ENCODE measurements at regions of chr2 and their contacts with region 1.

Region 1: DNA sequence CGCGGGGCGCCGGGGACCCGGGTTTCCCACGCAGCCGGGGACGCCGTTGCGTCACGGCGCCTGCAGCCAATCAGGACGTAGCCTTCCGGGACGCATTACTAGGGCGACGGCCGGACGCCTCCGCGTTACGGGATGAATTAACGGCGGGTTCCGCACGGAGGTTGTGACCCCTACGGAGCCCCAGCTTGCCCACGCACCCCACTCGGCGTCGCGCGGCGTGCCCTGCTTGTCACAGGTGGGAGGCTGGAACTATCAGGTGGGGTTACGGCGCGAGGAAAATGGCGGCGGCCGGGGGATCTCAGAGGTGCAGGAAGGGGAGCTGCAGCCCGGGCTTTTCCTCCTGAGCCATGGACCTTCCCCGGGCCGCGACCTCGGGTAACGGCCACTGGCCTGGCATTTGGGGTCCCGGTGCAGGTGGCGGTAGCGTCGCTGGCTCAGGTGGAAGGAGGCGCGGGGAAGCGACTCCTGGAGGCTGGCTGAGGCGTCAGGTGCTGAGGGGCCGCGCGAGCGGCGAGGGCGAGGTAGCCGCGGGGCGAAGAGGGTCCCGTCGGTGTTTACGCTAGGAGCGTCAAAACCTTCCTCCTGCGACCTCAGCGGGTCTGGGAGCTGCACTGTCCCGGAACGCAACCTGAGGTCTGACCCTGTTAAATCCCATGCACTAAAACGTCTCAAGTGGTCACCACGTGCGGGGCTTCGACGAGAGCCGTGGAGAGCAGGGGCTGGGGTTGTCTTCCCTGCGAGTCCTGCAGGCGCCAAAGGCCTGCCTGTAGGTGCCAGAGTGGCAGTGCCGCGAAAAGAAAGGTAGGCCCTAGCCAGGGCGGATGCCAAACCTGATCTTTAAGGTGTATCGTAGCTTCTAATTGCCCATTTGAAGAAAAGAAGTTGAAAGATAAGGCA is at the start of gene LCLAT1:
- DNase-seq: peak; percentile 90
- H3K4me3 Mint-ChIP-seq: peak within 1 kb of the TSS; percentile 88
- H3K27ac Mint-ChIP-seq: peak within 1 kb of the TSS; percentile 95
- H3K4me1 Mint-ChIP-seq: peaks cover 24% of the 10 kb centered on the region
- H3K27me3 Mint-ChIP-seq: no peaks in the 10 kb centered on the region
- total RNA-seq, gene LCLAT1: 21.5 to 24.3 TPM

Region 2: DNA sequence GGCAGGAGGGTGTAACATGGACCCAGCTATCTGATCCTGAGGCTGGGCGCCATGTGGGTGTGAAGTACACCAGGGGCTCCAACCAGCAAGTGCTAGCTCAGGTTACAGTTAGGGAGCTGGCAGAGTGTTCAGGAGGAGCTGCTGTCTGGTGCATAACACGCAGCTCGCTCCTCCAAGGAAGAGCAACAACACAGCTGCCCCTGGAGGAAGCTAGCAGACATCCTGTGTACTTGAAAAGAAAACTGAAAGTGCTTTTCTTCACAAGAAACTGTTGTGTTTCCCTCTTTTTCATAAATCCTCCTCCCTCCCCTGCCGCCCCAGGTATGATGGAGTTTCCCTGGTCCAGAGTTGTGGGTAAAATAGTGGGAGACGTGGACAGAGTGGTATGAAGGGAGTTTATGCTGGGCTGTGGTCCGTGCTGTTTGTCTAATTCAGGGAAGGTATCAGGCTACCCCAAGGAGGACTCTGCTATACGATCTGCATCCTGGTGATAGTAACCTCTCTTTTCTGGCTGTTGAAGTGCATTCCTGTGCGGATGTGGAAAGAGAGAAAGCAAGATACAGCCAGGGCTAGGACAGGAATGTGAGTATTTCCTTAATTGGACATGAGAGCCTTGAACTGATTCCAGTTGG is 222.2 kb before region 1 on chr2:
- CTCF ChIA-PET with region 1: interaction called, 5 read pairs
- POLR2A ChIA-PET with region 1: interaction called, 33 read pairs
- intact Hi-C with region 1: no loop called
- DNase-seq: peak; percentile 62
- H3K4me3 Mint-ChIP-seq: peak overlapping the region; percentile 83
- H3K27ac Mint-ChIP-seq: peak overlapping the region; percentile 97
- H3K4me1 Mint-ChIP-seq: peaks cover 70% of the 10 kb centered on the region
- H3K27me3 Mint-ChIP-seq: no peaks in the 10 kb centered on the region

Region 3: DNA sequence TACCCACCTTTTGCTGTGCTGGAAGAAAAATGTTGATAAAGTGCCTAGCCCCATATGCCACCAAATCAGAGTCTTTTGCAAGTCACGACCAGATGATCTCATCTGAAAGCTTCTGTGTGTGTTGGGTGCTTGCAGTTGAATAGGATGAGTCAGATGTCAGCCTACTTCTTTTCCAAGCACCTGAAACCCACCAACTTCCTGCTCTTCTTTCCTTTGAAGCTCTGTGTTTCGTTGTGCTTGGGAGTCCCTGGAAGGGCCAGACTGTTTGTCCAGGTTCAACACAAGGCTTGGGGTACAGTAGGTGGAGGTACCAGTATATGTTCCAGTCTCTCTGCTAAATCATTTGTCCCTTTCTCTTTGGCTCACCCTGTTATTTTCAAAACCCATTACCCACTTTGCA is 37.2 kb before region 1 on chr2:
- CTCF ChIA-PET with region 1: no interaction called
- POLR2A ChIA-PET with region 1: no interaction called
- intact Hi-C with region 1: loop called (anchors 1 kb)
- DNase-seq: peak; percentile 29
- H3K4me3 Mint-ChIP-seq: no peak overlapping the region
- H3K27ac Mint-ChIP-seq: peak overlapping the region; percentile 69
- H3K4me1 Mint-ChIP-seq: peaks cover 37% of the 10 kb centered on the region
- H3K27me3 Mint-ChIP-seq: no peaks in the 10 kb centered on the region

Region 4: GRCh38 chr2:30481323-30481800 is 34.0 kb after region 1 on chr2:
- CTCF ChIA-PET with region 1: no interaction called
- POLR2A ChIA-PET with region 1: no interaction called
- intact Hi-C with region 1: no loop called
- DNase-seq: no peak
- H3K4me3 Mint-ChIP-seq: no peak overlapping the region
- H3K27ac Mint-ChIP-seq: no peak overlapping the region
- H3K4me1 Mint-ChIP-seq: peaks cover 14% of the 10 kb centered on the region
- H3K27me3 Mint-ChIP-seq: no peaks in the 10 kb centered on the region